PC-9 (cell line): ENCODE measurements at regions of chr5 and their contacts with region 1.

Region 1: GRCh38 chr5:54517174-54518092 is at the start of gene SNX18:
- DNase-seq: peak; percentile 72 to 88
- H3K4me3 ChIP-seq: peak within 1 kb of the TSS; percentile 72
- H3K27ac ChIP-seq: peak within 1 kb of the TSS; percentile 31; the same call in 1 of the 2 replicates
- H3K4me1 ChIP-seq: peaks cover 40% of the 10 kb centered on the region
- H3K27me3 ChIP-seq: no peaks in the 10 kb centered on the region
- CTCF ChIP-seq: peak; percentile 90
- total RNA-seq, gene SNX18: 9.7 and 13.1 TPM in 2 replicates

Region 2: DNA sequence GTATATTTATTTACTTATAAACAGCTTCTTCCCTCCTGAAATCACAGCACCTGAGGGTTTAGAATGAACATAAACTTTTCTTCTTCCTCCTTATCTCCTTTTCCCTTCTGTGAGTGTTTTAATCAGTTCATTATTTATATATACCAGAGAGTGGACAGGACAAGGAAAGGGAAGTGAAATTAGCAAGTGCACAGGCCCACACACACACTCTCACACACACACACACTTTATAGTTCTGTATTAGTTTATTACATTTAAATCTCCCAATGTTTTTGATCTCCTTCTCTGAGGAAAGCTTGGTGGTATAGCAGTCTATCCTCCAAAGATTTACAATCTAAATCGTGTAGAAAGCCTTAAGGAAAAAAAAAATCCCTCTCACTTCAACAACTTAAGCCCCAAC is 603.5 kb before region 1 on chr5:
- CTCF ChIA-PET with region 1: no interaction called
- POLR2A ChIA-PET with region 1: no interaction called
- intact Hi-C with region 1: no loop called
- DNase-seq: no peak
- H3K4me3 ChIP-seq: no peak overlapping the region
- H3K27ac ChIP-seq: no peak overlapping the region
- H3K4me1 ChIP-seq: no peaks in the 10 kb centered on the region
- H3K27me3 ChIP-seq: no peaks in the 10 kb centered on the region
- CTCF ChIP-seq: no peak

Region 3: DNA sequence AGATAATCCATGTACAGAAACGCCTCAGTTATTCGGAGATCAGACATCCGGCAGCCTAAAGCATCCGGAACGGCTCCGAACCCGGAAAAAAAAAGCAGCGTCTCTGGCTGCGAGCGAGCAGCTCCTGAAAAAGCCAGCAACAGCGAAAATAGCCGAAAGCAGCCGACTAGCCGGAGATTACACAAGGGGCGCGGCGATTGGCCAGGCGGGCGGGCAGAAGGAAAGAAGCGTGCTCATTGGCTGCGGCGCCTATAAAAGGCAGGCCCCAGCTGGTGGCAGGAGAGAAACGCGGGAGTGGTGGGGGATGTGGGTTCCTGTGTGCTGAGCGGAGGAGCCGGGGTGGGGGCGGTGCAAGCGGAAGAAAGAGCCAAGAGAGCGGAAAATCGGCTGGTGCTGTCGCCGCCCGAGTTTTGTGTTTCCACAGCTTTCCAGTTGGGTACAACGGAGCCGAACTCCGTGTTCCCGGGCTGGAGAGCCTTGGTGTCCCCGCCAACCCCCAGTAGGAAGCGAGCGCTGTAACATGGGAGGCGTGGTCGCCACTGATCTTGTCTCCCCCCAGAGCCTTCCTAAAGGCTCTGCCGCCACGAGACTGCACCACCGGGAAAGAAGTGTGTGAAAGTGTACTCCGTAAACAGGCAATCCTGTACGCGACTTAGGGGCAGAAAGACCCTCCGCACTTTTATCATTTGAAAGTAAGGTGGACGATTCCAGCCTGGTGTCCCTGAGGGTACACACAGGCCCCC is 206.8 kb before region 1 on chr5 and contains the start of gene ARL15:
- CTCF ChIA-PET with region 1: interaction called, 3 read pairs
- POLR2A ChIA-PET with region 1: no interaction called
- intact Hi-C with region 1: loop called (anchors 10 kb)
- DNase-seq: peak; percentile 82 to 89
- H3K4me3 ChIP-seq: peak within 1 kb of the TSS; percentile 65
- H3K27ac ChIP-seq: no peak within 1 kb of the TSS
- H3K4me1 ChIP-seq: peaks cover 11% of the 10 kb centered on the region; the same call in 1 of the 2 replicates
- H3K27me3 ChIP-seq: no peaks in the 10 kb centered on the region
- CTCF ChIP-seq: 0 out of 2 replicates have a peak, but pooled peaks have one; percentile 15
- total RNA-seq, gene ARL15: 0.33 and 0.50 TPM in 2 replicates

Region 4: DNA sequence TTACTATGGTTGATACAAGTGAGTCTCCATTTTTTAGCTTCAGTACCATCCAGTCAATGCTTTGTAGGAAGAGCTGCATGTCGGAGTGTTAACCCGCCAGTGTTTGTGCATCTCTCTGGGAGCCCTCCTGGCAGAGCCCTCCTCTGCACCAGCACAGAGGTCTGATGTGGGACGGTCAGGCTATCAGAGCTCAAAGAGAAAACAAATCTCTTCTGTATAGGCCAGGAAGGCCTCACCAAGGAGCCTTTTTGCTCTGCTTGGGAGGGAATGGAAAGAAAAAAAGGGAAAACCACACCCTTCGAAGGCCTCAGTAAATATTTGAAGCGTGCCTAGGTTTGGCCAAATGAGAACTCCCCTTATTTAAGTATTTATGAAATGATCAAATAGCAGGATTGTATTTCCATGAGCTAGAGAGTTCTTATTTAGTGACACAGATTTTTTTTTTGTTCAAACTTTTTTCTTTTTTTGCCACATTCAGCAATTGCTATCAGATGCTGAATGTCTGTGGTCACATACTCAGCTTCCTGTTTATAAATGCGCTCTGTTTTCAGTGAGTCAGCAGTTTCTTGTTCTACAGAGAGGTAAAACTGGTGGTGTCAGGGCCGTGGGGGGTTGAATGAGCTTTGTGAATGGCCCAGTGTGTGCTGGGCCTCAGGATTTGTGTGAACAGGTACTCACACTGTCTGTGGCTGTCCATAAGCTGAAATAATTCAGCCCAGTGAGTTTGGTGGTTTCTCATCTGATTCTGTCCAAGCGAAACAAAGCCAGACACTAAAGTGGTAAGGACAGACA is 226.8 kb after region 1 on chr5:
- CTCF ChIA-PET with region 1: interaction called, 4 read pairs
- POLR2A ChIA-PET with region 1: no interaction called
- intact Hi-C with region 1: loop called (anchors 1 kb)
- DNase-seq: peak; percentile 52 to 95
- H3K4me3 ChIP-seq: no peak overlapping the region
- H3K27ac ChIP-seq: peak overlapping the region; percentile 88
- H3K4me1 ChIP-seq: peaks cover 52% of the 10 kb centered on the region
- H3K27me3 ChIP-seq: no peaks in the 10 kb centered on the region
- CTCF ChIP-seq: no peak

Region 5: GRCh38 chr5:54867310-54867944 is 350.0 kb after region 1 on chr5:
- CTCF ChIA-PET with region 1: interaction called, 15 read pairs
- POLR2A ChIA-PET with region 1: no interaction called
- intact Hi-C with region 1: loop called (anchors 1 kb)
- DNase-seq: peak in 1 of 2 experiments; percentile 57
- H3K4me3 ChIP-seq: peak overlapping the region; percentile 24; the same call in 1 of the 2 replicates
- H3K27ac ChIP-seq: no peak overlapping the region
- H3K4me1 ChIP-seq: no peaks in the 10 kb centered on the region
- H3K27me3 ChIP-seq: no peaks in the 10 kb centered on the region
- CTCF ChIP-seq: peak; percentile 86

Region 6: DNA sequence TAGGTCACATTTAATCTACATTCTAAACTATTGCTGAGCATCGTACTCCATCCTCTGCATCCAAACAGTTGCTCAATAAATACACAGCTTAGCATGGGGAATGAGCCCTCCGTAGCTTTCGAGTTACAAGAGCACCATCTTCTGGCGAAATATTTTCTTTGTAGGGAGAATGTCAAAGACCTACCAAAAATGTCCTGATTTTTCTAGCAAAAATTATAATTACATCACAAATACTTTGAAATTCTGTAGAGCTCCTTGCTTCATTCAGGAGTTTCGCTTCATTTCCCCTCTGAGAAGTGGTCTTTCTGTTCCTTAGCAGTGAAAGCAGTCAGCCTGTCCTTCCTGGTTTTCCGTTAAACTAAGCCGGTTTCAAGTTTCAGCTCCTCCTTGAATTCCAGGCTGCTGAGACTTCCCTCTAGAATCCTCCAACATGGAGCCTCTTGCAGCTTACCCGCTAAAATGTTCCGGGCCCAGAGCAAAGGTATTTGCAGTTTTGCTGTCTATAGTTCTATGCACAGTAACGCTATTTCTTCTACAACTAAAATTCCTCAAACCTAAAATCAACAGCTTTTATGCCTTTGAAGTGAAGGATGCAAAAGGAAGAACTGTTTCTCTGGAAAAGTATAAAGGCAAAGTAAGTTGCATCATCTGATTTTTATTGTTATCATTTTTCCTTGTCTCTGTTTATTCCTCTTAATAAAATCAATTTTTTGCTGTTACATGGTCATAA is 642.5 kb after region 1 on chr5 and contains the start of gene GPX8:
- CTCF ChIA-PET with region 1: no interaction called
- POLR2A ChIA-PET with region 1: no interaction called
- intact Hi-C with region 1: loop called (anchors 1 kb)
- DNase-seq: peak; percentile 31 to 79
- H3K4me3 ChIP-seq: peak within 1 kb of the TSS; percentile 68
- H3K27ac ChIP-seq: peak within 1 kb of the TSS; percentile 53
- H3K4me1 ChIP-seq: peaks cover 7% of the 10 kb centered on the region
- H3K27me3 ChIP-seq: no peaks in the 10 kb centered on the region
- CTCF ChIP-seq: peak; percentile 88
- total RNA-seq, gene GPX8: 24.6 and 40.2 TPM in 2 replicates